H1 (cell line): ENCODE measurements at regions of chr11 and their contacts with region 1.

Region 1: DNA sequence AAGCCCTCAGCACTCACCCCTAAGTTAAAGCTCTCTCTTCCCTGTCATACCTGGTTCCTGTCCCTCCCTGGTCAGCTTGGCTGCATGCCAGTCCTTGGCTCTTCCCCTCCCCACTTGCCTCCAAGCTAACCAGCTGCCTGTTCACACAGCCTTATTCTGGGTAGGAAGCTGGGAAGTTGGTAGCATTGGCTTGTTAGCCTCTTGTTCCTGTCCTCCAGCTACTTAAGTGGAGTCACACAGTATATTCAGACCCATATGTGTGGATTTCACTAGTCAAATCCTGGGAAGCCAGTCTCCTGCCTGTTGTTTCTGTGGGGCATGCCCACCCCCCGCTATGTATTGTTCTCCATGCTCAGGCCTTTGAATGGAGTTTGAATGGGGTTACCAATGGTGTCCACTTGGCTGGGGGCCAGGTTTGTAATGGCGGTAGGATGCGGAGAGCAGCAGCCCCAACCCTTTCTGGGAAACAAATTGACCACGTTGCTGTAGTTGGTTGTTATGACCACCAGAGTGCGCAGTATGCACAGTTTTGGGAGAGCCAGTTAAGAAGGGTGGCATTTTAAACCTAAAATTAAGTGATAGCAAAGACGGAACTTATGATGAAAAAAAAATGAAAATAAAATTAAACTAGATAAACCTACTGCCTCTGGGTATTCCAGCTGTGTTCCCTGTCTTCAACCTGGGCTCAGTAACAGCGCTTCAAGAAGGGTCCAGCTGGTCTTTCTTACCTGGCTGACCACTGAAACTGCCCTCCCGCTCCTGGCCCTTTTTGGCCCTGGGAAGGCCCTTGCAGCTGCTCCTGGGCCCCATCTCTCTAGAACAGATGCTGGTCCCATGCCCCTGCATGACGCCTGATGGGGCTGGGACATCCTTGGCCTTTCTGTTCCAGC is 10.7 kb upstream of the RPS3 start:
- DNase-seq: peak; percentile 33 to 77
- H3K4me3 ChIP-seq: 0 out of 8 replicates have a peak overlapping the region, but pooled peaks of 1 of the 4 experiments have one; percentile 1
- H3K27ac ChIP-seq: no peak overlapping the region
- H3K4me1 ChIP-seq: peaks cover 0 to 3% (median 0%) of the 10 kb centered on the region in 4 experiments; a peak in 3 of 7 replicates
- H3K27me3 ChIP-seq: no peaks in the 10 kb centered on the region
- CTCF ChIP-seq: peak; percentile 56 to 79 (median 78)
- EP300 ChIP-seq: no peak
- POLR2A ChIP-seq: no peak
- RAD21 ChIP-seq: peak; percentile 84 to 85

Region 2: DNA sequence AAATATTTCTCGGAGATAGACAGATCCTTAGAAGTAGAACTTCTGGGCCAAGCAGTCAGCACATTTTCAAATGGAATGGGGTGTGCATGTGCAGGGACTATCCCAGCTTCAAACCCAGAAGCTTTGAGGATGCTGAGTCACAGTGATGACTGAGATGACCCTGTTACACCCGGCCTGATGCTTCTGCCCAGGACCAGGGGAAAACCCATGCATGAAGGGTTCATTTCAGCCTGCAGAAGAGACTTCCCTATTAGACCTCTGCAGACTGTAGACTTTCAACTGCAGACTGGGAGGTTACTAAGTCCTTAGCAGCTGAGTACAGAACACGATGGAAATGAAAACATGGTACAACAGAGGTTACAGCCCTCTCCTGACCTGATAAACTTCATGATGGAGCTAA is 288.3 kb before region 1 on chr11:
- CTCF ChIA-PET with region 1: no interaction called
- POLR2A ChIA-PET with region 1: no interaction called
- DNase-seq: no peak
- H3K4me3 ChIP-seq: no peak overlapping the region
- H3K27ac ChIP-seq: no peak overlapping the region
- H3K4me1 ChIP-seq: no peaks in the 10 kb centered on the region; a peak in 1 of 7 replicates
- H3K27me3 ChIP-seq: no peaks in the 10 kb centered on the region
- CTCF ChIP-seq: no peak
- EP300 ChIP-seq: no peak
- POLR2A ChIP-seq: no peak
- RAD21 ChIP-seq: no peak

Region 3: DNA sequence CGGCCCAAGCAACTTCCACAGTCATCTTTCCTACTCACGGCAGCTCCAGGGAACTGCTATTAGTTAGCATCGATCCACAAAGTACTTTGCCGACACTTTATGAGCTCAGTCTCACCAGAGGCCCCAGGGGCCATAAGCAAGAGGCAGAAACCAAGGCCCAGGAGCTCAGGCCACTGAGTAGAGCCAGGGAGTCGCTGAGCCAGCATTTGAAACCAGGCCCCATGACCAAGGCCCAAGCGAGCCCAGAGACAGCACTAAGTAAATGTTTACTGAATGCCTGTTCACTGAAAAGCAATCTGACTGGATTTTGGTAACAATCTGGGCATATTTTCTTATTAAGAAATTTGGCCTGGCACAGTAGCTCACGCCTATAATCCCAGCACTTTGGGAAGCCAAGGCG is 80.5 kb before region 1 on chr11:
- CTCF ChIA-PET with region 1: interaction called, 17 read pairs
- POLR2A ChIA-PET with region 1: no interaction called
- DNase-seq: no peak
- H3K4me3 ChIP-seq: no peak overlapping the region
- H3K27ac ChIP-seq: no peak overlapping the region
- H3K4me1 ChIP-seq: peaks cover 0 to 7% (median 4%) of the 10 kb centered on the region in 4 experiments; a peak in 5 of 7 replicates
- H3K27me3 ChIP-seq: no peaks in the 10 kb centered on the region
- CTCF ChIP-seq: no peak
- EP300 ChIP-seq: no peak
- POLR2A ChIP-seq: no peak
- RAD21 ChIP-seq: no peak

Region 4: DNA sequence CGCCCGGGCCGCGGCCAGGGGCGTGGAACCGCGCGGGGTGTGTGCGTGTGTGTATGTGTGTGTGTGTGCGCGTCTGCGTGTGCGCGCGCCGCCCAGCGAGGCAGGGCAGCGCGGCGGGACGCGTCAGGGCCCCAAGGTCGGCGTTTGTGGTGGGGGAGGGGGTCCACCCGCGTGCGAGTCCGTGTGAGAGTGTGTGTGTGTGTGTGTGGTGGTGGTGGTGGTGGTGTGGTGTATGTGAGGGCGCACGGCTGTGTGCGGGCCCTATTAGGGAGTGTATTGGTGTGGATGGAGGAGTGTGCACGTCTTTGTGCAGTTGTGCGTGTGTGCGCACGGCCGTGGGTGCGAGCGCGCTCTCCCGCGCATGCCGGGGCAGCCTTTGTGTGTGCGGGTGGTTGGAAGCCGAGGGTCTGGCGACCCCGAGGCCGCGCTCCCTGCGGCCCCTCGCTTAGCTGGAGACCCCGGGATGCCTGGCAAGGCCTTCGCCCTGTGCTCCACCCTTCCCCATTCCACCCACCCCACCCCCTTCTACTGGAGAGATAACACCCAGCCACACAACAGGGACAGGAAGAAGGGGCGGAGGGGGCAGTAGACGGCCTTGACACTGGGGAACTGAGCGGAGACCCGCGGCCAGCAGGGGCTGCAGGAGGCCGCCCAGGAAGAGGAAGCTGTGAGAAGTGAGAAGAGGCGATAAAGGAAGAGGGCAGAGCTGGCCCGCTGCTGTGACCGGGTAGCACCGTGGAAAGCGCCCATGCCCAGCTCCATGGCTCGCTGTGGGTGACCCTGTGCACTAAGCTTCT is 36.6 kb before region 1 on chr11:
- CTCF ChIA-PET with region 1: interaction called, 15 read pairs
- POLR2A ChIA-PET with region 1: no interaction called
- DNase-seq: peak in 1 of 2 experiments; percentile 63
- H3K4me3 ChIP-seq: peak overlapping the region; percentile 53 to 82 (median 58)
- H3K27ac ChIP-seq: no peak overlapping the region
- H3K4me1 ChIP-seq: peaks cover 10 to 28% (median 15%) of the 10 kb centered on the region in 4 experiments
- H3K27me3 ChIP-seq: peaks cover 4 to 11% (median 10%) of the 10 kb centered on the region in 4 experiments; a peak in 6 of 7 replicates
- CTCF ChIP-seq: peak in 2 of 3 experiments; percentile 13 to 22; a peak in 2 of 4 replicates
- EP300 ChIP-seq: no peak
- POLR2A ChIP-seq: no peak
- RAD21 ChIP-seq: peak; percentile 5 to 22; a peak in 1 of 4 replicates

Region 5: DNA sequence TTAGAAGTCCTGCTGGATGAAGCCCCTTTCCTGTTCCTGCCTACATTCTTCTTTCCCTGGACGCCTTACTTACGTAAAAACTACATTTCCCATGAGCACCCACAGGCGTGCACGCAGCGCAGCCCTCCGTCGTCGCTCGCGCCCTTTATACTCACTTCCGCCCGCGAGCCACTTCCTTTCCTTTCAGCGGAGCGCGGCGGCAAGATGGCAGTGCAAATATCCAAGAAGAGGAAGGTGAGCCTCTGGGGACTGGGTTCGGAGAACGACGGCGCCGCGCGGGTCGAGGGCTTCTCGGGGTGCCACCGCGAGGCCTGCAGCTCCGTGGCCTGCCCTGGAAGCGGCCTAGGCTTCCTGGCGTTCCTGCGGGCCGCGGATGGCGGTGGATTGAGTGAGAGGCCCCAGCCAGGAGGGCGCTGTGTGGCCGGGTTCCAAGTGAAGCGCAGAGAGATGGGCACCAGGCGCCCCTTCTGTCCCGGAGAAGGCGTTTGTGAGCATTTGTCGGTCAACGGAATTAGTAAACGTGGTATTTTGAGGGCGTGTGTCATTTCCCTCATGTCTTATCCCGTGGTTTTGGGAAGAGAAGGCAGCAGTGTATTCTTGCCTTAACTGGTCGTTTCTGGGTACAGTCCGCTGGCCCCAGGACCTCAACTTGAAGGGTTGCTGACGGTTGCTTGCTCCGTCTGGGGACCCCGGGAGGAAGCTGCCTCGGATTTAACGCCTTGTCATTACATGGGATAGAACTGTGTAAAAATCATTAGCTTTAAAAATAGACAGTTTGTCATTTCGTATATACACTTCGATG is 10.9 kb after region 1 on chr11 and contains the start of gene RPS3:
- CTCF ChIA-PET with region 1: interaction called, 48 read pairs
- POLR2A ChIA-PET with region 1: interaction called, 269 read pairs
- DNase-seq: peak; percentile 80 to 90
- H3K4me3 ChIP-seq: peak within 1 kb of the TSS; percentile 86 to 100 (median 99)
- H3K27ac ChIP-seq: peak within 1 kb of the TSS; percentile 97
- H3K4me1 ChIP-seq: peaks cover 0 to 9% (median 4%) of the 10 kb centered on the region in 4 experiments; a peak in 6 of 7 replicates
- H3K27me3 ChIP-seq: no peaks in the 10 kb centered on the region
- CTCF ChIP-seq: no peak
- EP300 ChIP-seq: no peak
- POLR2A ChIP-seq: peak; percentile 99
- RAD21 ChIP-seq: no peak
- total RNA-seq, gene RPS3: 3,813 and 3,882 TPM in 2 replicates

Region 6: DNA sequence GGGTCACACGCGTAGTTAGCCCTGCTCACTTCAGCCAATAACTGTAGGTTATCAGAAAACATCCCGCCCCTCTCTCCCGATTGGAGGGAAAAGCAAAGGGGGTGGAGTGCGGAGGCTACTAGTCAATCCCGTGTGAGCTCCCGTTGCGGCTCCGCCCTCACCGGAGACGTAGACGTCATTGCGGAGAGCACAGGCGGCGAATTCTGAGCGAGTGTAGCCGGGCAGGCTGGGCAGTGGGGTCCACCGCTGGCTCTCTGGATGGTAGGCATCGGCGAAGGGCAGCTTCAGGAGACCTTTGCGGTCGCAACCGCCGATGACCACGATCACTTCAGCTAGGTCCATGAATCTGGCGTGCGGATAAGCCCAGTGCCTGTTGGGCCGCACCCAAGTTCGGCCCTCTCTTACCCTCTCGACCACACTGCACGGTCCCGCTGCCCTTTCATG is 39.7 kb after region 1 on chr11:
- CTCF ChIA-PET with region 1: interaction called, 201 read pairs
- POLR2A ChIA-PET with region 1: interaction called, 570 read pairs
- DNase-seq: no peak
- H3K4me3 ChIP-seq: no peak overlapping the region
- H3K27ac ChIP-seq: no peak overlapping the region
- H3K4me1 ChIP-seq: peaks cover 0 to 23% (median 15%) of the 10 kb centered on the region in 4 experiments; a peak in 6 of 7 replicates
- H3K27me3 ChIP-seq: peaks cover 47 to 66% (median 60%) of the 10 kb centered on the region in 4 experiments
- CTCF ChIP-seq: no peak
- EP300 ChIP-seq: no peak
- POLR2A ChIP-seq: no peak
- RAD21 ChIP-seq: no peak

Region 7: DNA sequence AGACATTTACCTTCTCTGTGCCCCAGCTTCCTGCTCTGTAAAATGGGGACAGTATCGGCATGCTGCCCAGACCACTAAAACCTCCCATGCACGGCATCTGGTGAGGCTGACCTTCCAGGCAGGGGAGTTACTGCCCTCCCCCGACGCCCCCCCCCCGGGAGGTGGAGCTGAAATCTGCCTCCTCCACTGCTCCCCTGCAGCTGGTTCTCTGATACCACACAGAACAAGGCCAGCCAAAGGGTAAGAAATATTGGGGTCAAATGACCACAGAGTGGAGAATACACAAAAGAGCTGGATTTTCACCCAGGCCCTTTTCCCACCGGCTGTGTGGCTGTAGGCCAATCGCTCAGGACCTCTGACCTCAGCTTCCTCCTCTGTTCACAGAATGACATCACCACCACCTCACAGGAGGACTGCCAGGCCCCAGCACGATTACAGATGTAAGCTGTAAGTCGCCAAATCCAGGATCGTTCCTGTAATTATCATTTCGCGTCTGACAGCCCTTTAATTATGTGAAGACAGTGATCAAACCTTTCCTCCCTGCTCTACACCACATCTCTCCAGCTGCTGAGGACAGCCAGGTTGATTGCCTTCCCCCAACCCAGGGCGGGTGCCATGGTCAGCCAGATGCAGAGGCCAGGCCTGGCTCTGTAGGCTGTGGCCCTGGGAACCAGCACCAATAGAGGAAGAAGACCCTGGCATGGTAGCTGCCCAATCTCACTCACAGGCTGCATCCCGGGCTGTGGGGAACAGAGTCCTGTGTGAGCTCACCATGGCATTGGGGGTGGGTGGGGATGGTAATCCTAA is 80.1 kb after region 1 on chr11:
- CTCF ChIA-PET with region 1: no interaction called
- POLR2A ChIA-PET with region 1: no interaction called
- DNase-seq: no peak
- H3K4me3 ChIP-seq: no peak overlapping the region
- H3K27ac ChIP-seq: no peak overlapping the region
- H3K4me1 ChIP-seq: peaks cover 0 to 7% (median 3%) of the 10 kb centered on the region in 4 experiments; a peak in 5 of 7 replicates
- H3K27me3 ChIP-seq: no peaks in the 10 kb centered on the region
- CTCF ChIP-seq: no peak
- EP300 ChIP-seq: no peak
- POLR2A ChIP-seq: no peak
- RAD21 ChIP-seq: no peak

Region 8: DNA sequence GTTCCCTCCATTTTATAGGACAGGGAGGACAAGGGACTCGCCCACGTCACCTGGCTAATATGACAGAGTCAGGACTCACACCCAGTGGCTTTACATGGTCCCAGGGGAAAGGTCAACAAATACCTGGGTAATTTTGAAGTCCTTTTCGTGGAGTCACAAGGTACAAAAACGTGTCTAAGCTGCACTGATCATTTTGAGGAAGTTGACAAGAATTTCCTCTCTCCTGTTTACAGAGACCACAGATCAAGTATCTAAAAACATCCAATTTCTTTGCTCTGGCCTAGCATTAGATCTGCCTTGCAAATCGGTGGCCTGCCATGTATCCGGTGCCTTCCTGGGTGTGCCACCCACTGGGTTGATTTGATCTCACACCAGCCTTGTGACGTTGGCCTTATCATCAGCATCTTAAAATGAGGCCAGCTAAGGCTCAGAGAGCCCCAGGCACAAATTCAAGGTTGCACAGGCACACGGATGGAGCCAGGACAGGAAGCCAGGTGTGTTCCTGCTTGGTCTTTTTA is 119.5 kb after region 1 on chr11:
- CTCF ChIA-PET with region 1: no interaction called
- POLR2A ChIA-PET with region 1: no interaction called
- DNase-seq: no peak
- H3K4me3 ChIP-seq: no peak overlapping the region
- H3K27ac ChIP-seq: no peak overlapping the region
- H3K4me1 ChIP-seq: no peaks in the 10 kb centered on the region
- H3K27me3 ChIP-seq: no peaks in the 10 kb centered on the region
- CTCF ChIP-seq: no peak
- EP300 ChIP-seq: no peak
- POLR2A ChIP-seq: no peak
- RAD21 ChIP-seq: no peak

Region 9: DNA sequence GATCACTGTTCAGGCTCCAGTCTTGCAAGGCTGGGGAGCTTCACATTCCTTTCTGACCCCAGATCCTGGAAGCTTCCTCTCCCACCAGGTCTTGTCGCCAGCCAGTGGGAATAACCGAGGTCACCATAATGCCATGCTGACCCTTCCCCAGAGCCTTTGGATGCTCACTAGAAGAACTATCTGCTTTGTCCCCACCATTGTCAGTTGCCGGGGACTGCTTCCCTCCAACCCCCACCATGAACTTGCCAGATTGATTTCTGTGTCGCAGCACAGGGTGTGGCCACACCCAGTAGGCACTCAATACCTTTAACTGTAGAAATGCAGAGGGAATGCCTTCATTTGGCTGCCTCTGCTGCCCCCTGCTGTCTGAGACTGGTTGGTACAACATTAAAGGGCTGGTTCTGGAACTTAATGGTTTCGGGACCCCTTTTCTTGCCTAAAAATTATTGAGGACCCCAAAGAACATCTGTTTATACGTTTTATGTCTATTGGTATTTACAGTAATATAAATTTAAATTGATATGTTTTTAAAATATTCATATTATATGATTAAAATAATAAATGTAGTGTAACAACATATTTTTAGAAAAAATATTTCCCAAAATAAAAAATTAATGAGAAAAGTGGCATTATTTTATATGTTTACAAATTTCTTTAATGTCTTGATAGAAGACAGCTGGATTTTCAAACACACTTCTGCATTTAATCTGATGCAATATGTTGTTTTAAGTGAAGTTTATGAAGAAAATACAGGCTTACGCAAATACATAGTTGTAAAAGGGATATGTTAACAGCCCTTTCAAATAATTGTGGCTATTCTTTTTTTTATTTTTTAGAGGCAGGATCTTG is 143.8 kb after region 1 on chr11:
- CTCF ChIA-PET with region 1: interaction called, 47 read pairs
- POLR2A ChIA-PET with region 1: no interaction called
- DNase-seq: peak in 1 of 2 experiments; percentile 92
- H3K4me3 ChIP-seq: peak overlapping the region in 3 of 4 experiments; percentile 5 to 43 (median 17); a peak in 1 of 8 replicates
- H3K27ac ChIP-seq: no peak overlapping the region
- H3K4me1 ChIP-seq: peaks cover 0 to 5% (median under 1%) of the 10 kb centered on the region in 4 experiments; a peak in 1 of 7 replicates
- H3K27me3 ChIP-seq: no peaks in the 10 kb centered on the region
- CTCF ChIP-seq: peak; percentile 63 to 88 (median 87)
- EP300 ChIP-seq: no peak
- POLR2A ChIP-seq: no peak
- RAD21 ChIP-seq: peak; percentile 92 to 95